Endothelial cell of umbilical vein (primary cell): ENCODE measurements at regions of chr18 and their contacts with region 1.

Region 1: GRCh38 chr18:34493099-34493544 is 217.0 kb upstream of the DTNA start:
- DNase-seq: peak; percentile 87
- H3K4me3 ChIP-seq: peak overlapping the region; percentile 57 to 85 (median 72)
- H3K27ac ChIP-seq: peak overlapping the region; percentile 68
- H3K4me1 ChIP-seq: no peaks in the 10 kb centered on the region
- H3K27me3 ChIP-seq: no peaks in the 10 kb centered on the region
- CTCF ChIP-seq: no peak
- POLR2A ChIP-seq: no peak

Region 2: GRCh38 chr18:34480162-34480561 is 13.0 kb before region 1 on chr18:
- CTCF ChIA-PET with region 1: interaction called, 16 read pairs
- POLR2A ChIA-PET with region 1: no interaction called
- dilution Hi-C with region 1: no loop called
- intact Hi-C with region 1: no loop called
- DNase-seq: no peak
- H3K4me3 ChIP-seq: no peak overlapping the region
- H3K27ac ChIP-seq: no peak overlapping the region
- H3K4me1 ChIP-seq: no peaks in the 10 kb centered on the region
- H3K27me3 ChIP-seq: peaks cover 0 to 10% of the 10 kb centered on the region in 2 experiments
- CTCF ChIP-seq: no peak
- POLR2A ChIP-seq: no peak

Region 3: GRCh38 chr18:34624551-34624950 is 131.4 kb after region 1 on chr18:
- CTCF ChIA-PET with region 1: no interaction called
- POLR2A ChIA-PET with region 1: no interaction called
- dilution Hi-C with region 1: no loop called
- intact Hi-C with region 1: loop called (anchors 10 kb)
- DNase-seq: peak; percentile 66
- H3K4me3 ChIP-seq: no peak overlapping the region
- H3K27ac ChIP-seq: no peak overlapping the region
- H3K4me1 ChIP-seq: peaks cover 22% of the 10 kb centered on the region
- H3K27me3 ChIP-seq: no peaks in the 10 kb centered on the region
- CTCF ChIP-seq: no peak
- POLR2A ChIP-seq: no peak

Region 4: GRCh38 chr18:34650121-34650545 is 157.0 kb after region 1 on chr18:
- CTCF ChIA-PET with region 1: no interaction called
- POLR2A ChIA-PET with region 1: no interaction called
- dilution Hi-C with region 1: no loop called
- intact Hi-C with region 1: no loop called
- DNase-seq: peak; percentile 5
- H3K4me3 ChIP-seq: no peak overlapping the region
- H3K27ac ChIP-seq: no peak overlapping the region
- H3K4me1 ChIP-seq: no peaks in the 10 kb centered on the region
- H3K27me3 ChIP-seq: no peaks in the 10 kb centered on the region
- CTCF ChIP-seq: no peak
- POLR2A ChIP-seq: no peak

Region 5: GRCh38 chr18:34707670-34708069 is 214.5 kb after region 1 on chr18:
- CTCF ChIA-PET with region 1: no interaction called
- POLR2A ChIA-PET with region 1: no interaction called
- dilution Hi-C with region 1: no loop called
- intact Hi-C with region 1: loop called (anchors 1 kb)
- DNase-seq: peak; percentile 92
- H3K4me3 ChIP-seq: peak overlapping the region in 1 of 3 experiments; percentile 32
- H3K27ac ChIP-seq: peak overlapping the region; percentile 52
- H3K4me1 ChIP-seq: peaks cover 25% of the 10 kb centered on the region
- H3K27me3 ChIP-seq: no peaks in the 10 kb centered on the region
- CTCF ChIP-seq: no peak
- POLR2A ChIP-seq: no peak